Activated CD8-positive, alpha-beta T cell treated with anti-CD3 and anti-CD28 coated beads for 36 hours (primary cell): ENCODE measurements at regions of chr3 and their contacts with region 1.

Region 1: DNA sequence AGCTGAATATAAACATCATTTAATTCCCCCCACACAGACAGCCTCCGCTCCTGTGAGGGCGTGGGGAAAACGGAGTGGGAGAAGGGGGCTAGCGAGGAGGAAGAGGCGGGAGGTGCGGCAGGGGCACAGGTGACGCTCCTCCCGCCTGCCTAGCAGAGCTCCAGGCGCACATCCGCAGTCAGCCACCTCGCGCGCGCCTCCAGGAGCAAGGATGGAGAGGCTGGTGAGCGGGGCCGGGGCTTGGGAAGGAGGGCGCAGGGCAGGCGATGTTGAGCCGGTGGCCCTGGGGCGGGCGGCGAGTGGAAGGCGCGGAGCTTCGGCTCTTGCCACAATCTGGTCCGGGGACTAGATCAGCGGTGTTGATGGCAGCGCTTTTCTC is at the start of gene CD200:
- DNase-seq: peak; percentile 66
- ATAC-seq: peak; percentile 70
- H3K4me3 Mint-ChIP-seq: peak within 1 kb of the TSS; percentile 90
- H3K27ac Mint-ChIP-seq: peak within 1 kb of the TSS; percentile 93
- H3K4me1 Mint-ChIP-seq: peaks cover 38% of the 10 kb centered on the region
- H3K27me3 Mint-ChIP-seq: no peaks in the 10 kb centered on the region
- CTCF ChIP-seq: no peak
- total RNA-seq, gene CD200: 15.7 to 16.7 TPM

Region 2: DNA sequence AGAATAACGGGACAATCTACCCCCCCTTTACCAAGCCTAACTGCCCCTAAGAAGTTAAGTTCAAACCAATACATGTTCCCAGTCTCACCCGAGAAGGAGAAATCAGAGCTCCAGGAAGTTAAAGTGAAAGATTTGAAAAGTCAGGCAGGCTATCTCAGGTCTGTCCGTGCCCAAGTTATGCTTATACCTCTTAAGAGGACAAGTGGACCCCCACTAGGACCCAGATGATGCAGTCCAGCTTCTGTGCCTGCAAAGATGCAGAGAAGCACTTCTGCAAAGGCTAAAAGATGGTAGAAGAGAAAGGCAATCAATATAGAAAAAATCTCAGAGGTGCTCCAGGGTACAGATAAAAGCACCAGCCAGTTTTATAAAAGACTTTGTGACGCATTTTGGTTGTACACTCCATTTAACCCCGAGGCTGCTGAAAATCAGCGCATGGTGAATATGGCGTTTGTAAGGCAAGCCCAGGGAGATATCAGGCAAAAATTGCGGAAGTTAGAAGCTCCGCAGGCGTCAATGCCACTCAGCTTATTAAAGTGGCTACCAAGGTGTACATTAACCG is 29.1 kb before region 1 on chr3:
- CTCF ChIA-PET with region 1: interaction called, 12 read pairs
- POLR2A ChIA-PET with region 1: interaction called, 3 read pairs
- intact Hi-C with region 1: no loop called
- DNase-seq: peak; percentile 31
- ATAC-seq: peak; percentile 65
- H3K4me3 Mint-ChIP-seq: no peak overlapping the region
- H3K27ac Mint-ChIP-seq: no peak overlapping the region
- H3K4me1 Mint-ChIP-seq: peaks cover under 1% of the 10 kb centered on the region
- H3K27me3 Mint-ChIP-seq: no peaks in the 10 kb centered on the region
- CTCF ChIP-seq: no peak

Region 3: DNA sequence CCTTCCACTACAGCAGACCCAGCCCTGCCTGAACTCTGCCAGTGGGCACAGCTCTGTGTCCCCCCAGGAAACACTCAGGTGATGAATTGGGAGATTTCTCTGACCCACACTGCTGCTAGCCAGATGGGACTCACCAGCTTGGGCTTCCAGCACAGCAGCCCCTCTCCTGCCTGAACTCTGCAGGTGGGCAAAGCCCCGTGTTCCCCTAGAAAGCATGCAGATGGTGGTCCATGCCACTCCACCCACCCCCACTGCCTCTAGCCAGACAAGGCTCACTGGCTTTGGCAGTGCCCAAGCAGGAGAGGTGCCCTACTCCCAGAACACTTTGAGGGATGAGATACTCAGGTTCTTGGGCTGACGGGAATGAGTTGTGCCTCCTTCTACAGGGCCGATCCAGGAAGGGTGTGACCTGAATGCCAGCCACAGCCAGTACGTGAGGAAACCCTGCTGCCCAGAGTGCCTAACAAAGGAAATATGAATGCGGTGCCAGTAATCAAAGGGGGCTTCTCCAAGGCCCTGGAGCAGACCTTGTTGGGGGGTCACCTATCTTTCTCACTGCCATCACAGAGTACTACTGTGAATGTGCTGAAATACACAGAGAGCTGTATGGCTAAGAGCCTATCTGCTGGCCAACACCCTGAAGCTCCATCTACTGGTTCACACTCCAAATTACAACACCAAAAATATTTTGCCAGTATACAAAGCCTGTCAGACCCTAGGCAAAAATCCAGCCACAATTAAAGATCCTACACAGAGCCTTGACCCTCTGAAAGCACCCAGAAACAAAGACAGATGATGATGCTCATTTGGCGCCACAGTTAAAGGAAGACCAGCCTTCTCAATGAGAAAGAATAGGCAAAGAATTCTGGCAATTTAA is 104.4 kb after region 1 on chr3:
- CTCF ChIA-PET with region 1: interaction called, 21 read pairs
- POLR2A ChIA-PET with region 1: interaction called, 3 read pairs
- intact Hi-C with region 1: loop called (anchors 5 kb)
- DNase-seq: no peak
- ATAC-seq: peak; percentile 93
- H3K4me3 Mint-ChIP-seq: no peak overlapping the region
- H3K27ac Mint-ChIP-seq: peak overlapping the region; percentile 46
- H3K4me1 Mint-ChIP-seq: peaks cover 36% of the 10 kb centered on the region
- H3K27me3 Mint-ChIP-seq: no peaks in the 10 kb centered on the region
- CTCF ChIP-seq: peak; percentile 32

Region 4: GRCh38 chr3:112498914-112499711 is 166.1 kb after region 1 on chr3 and contains the start of gene BTLA:
- CTCF ChIA-PET with region 1: interaction called, 16 read pairs
- POLR2A ChIA-PET with region 1: interaction called, 6 read pairs
- intact Hi-C with region 1: no loop called
- DNase-seq: peak; percentile 55
- ATAC-seq: peak; percentile 70
- H3K4me3 Mint-ChIP-seq: peak within 1 kb of the TSS; percentile 89
- H3K27ac Mint-ChIP-seq: peak within 1 kb of the TSS; percentile 97
- H3K4me1 Mint-ChIP-seq: peaks cover 52% of the 10 kb centered on the region
- H3K27me3 Mint-ChIP-seq: no peaks in the 10 kb centered on the region
- CTCF ChIP-seq: no peak
- total RNA-seq, gene BTLA: 12.8 to 13.2 TPM

Region 5: GRCh38 chr3:112531358-112531781 is 198.4 kb after region 1 on chr3:
- CTCF ChIA-PET with region 1: interaction called, 13 read pairs
- POLR2A ChIA-PET with region 1: no interaction called
- intact Hi-C with region 1: no loop called
- DNase-seq: no peak
- ATAC-seq: peak; percentile 45
- H3K4me3 Mint-ChIP-seq: no peak overlapping the region
- H3K27ac Mint-ChIP-seq: no peak overlapping the region
- H3K4me1 Mint-ChIP-seq: peaks cover 5% of the 10 kb centered on the region
- H3K27me3 Mint-ChIP-seq: no peaks in the 10 kb centered on the region
- CTCF ChIP-seq: peak; percentile 57